Prostate gland (tissue), 2 donors: ENCODE measurements at regions of chr1 and their contacts with region 1.

Region 1: GRCh38 chr1:236603991-236604904 is at the start of gene HEATR1:
- DNase-seq: peak; percentile 91
- H3K4me3 ChIP-seq: peak within 1 kb of the TSS; percentile 68
- H3K27ac ChIP-seq: peak within 1 kb of the TSS; percentile 62 to 66
- H3K4me1 ChIP-seq: no peaks in the 10 kb centered on the region
- H3K27me3 ChIP-seq: no peaks in the 10 kb centered on the region
- CTCF ChIP-seq: peak in 1 of 4 experiments; percentile 19
- POLR2A ChIP-seq: no peak
- total RNA-seq, gene HEATR1: 14.1 to 40.7 TPM

Region 2: DNA sequence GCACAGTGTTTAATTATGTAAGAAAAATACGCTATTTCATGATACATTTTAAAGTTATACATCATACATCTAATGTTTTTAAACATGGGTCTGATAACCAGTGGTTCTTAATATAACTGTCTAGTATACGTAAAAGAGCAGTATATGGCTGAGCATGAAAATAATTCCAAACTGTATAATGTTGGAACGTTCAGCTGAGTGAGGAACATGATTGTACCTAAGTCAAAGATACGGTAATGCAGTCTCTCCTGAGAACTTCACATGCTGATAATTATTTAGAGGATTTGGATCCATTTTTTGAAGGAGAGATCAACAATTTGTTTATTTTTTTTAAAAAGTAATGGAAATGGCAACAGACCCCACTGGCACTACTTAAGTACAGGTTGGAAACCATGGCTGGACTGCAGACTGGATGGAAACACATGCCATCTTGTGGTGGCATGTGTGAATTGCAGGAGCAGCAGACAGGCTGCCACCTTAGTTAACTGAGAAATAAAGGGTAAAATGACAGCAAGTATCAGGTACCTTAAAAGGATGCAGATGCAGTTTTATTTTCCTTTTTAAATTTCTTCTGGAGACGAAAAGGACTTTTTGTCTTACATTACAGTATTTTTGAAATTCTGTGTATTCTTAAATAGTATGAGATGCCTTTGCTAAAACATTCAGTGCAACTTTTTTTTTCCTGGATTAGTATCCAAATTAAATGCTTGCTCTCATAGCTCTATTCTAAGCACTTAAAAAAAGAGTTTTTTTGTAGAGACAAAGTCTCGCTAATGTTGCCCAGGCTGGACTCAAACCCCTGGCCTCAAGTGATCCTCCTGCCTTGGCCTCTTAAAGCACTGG is 264.6 kb after region 1 on chr1:
- intact Hi-C with region 1: loop called (anchors 10 kb)
- DNase-seq: no peak
- H3K4me3 ChIP-seq: no peak overlapping the region
- H3K27ac ChIP-seq: no peak overlapping the region
- H3K4me1 ChIP-seq: no peaks in the 10 kb centered on the region
- H3K27me3 ChIP-seq: no peaks in the 10 kb centered on the region
- CTCF ChIP-seq: peak; percentile 33 to 71 (median 60)
- POLR2A ChIP-seq: no peak

Region 3: GRCh38 chr1:237562242-237562823 is 958.1 kb after region 1 on chr1:
- intact Hi-C with region 1: loop called (anchors 10 kb)
- DNase-seq: peak; percentile 7
- H3K4me3 ChIP-seq: no peak overlapping the region
- H3K27ac ChIP-seq: no peak overlapping the region
- H3K4me1 ChIP-seq: no peaks in the 10 kb centered on the region
- H3K27me3 ChIP-seq: no peaks in the 10 kb centered on the region
- CTCF ChIP-seq: peak; percentile 42 to 51 (median 45)
- POLR2A ChIP-seq: no peak